ENCODE measurements at regions of chr6 and their contacts with region 1.

Region 1: DNA sequence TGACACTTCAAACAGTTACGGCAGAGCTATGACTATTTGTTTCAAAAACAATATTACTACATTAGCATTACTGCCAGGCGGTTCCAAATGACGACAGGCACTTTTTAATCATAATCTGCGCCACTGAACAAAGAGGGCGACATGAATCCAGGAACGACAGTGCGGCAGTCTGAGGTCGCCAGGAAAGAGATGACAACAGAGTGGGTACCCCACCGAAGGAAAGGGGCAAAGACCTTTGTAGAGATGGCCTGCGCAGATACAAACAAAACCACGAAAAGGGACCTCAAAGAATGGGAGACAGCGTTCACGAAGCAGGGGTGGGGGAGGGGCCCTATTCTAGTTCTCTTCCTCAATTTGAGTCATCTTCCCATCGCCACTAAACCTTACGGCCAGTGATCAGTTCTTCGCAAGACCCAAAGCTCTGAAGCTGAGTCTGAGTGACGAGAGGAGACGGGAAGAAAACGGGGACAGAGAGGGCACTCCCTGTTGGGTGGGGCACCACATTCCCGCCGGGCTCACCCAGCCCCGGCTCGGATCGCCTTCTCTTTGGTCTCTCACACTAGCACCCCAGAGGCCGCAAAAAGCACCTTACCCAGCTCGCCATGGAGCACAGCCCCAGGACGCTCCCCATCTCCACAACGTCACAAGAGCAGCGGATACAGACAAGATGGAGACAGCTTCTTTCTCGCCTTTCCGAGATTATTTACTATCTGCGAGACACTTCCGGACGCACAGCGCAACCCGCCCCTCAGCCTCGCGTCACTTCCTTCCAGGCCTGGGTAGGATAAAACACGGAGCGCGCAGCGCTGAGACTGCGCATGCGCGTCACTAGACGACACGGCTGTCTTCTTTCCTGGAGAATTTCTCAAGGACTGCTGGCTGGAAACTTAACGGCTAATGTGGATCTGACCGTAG is at the start of gene SERINC1:
- DNase-seq: peak; percentile 95 to 96
- ATAC-seq: peak; percentile 99 to 100 (median 99)
- H3K4me3 ChIP-seq: peak within 1 kb of the TSS; percentile 64 to 92 (median 82)
- H3K27ac ChIP-seq: peak within 1 kb of the TSS; percentile 83 to 98 (median 92)
- H3K4me1 ChIP-seq: peaks cover 0 to 53% (median 43%) of the 10 kb centered on the region in 9 donors
- H3K27me3 ChIP-seq: no peaks in the 10 kb centered on the region
- CTCF ChIP-seq: no peak
- total RNA-seq, gene SERINC1: 156 to 206 (median 178) TPM

Region 2: DNA sequence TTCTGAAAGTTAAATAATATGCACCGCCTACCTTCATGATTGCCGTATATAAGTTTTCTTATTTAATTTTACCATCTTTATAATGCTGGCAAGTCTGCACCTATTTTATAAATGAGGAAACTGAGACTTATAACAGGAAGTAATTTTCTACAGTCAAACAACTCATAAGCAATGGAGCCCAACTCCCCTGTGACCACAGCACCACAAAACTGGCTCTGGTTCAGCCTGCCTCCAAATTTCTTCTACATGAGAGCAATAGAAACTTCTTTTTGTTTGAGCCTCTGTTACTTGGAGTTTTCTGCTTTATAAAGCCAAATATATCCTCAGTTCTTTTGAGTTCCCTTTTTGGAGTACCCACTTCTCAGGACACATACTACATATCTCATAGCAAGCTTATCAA is 203.0 kb before region 1 on chr6:
- intact Hi-C with region 1: no loop called
- DNase-seq: no peak
- ATAC-seq: no peak
- H3K4me3 ChIP-seq: no peak overlapping the region
- H3K27ac ChIP-seq: no peak overlapping the region
- H3K4me1 ChIP-seq: no peaks in the 10 kb centered on the region
- H3K27me3 ChIP-seq: no peaks in the 10 kb centered on the region
- CTCF ChIP-seq: no peak

Region 3: GRCh38 chr6:122399384-122400158 is 71.8 kb before region 1 on chr6 and contains the start of gene HSF2:
- intact Hi-C with region 1: loop called in 7 of 10 experiments (anchors 2 to 5 kb)
- DNase-seq: peak; percentile 95 to 96
- ATAC-seq: peak; percentile 99 to 100 (median 99)
- H3K4me3 ChIP-seq: peak within 1 kb of the TSS; percentile 76 to 99 (median 95)
- H3K27ac ChIP-seq: peak within 1 kb of the TSS; percentile 32 to 92 (median 88)
- H3K4me1 ChIP-seq: peaks cover 0 to 46% (median 28%) of the 10 kb centered on the region in 9 donors
- H3K27me3 ChIP-seq: no peaks in the 10 kb centered on the region
- CTCF ChIP-seq: peak in 2 of 9 donors; percentile 0 to 4
- total RNA-seq, gene HSF2: 13.8 to 28.7 (median 23.0) TPM

Region 4: DNA sequence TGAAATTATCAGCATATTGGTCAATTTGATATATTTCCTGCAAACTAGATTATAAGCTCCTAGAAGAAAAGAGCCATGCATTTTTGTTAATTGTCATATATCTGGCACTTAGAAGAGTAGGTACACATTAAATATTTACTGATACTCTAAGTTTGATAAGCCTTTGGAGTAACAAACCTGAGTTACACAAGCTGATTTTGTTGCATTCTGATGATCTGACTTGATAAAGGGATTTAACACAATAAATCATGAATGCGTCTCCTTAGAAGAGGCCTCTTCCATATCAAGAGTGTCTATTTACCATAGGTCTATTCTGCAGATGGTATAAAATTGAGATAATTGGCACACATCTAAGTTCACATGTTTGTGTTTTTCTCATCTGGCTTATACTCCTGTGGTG is 48.8 kb after region 1 on chr6:
- intact Hi-C with region 1: loop called in 3 of 10 experiments (anchors 5 to 10 kb)
- DNase-seq: no peak
- ATAC-seq: no peak
- H3K4me3 ChIP-seq: no peak overlapping the region
- H3K27ac ChIP-seq: no peak overlapping the region
- H3K4me1 ChIP-seq: no peaks in the 10 kb centered on the region
- H3K27me3 ChIP-seq: peaks cover 0 to 4% (median 0%) of the 10 kb centered on the region in 7 donors
- CTCF ChIP-seq: no peak

Region 5: DNA sequence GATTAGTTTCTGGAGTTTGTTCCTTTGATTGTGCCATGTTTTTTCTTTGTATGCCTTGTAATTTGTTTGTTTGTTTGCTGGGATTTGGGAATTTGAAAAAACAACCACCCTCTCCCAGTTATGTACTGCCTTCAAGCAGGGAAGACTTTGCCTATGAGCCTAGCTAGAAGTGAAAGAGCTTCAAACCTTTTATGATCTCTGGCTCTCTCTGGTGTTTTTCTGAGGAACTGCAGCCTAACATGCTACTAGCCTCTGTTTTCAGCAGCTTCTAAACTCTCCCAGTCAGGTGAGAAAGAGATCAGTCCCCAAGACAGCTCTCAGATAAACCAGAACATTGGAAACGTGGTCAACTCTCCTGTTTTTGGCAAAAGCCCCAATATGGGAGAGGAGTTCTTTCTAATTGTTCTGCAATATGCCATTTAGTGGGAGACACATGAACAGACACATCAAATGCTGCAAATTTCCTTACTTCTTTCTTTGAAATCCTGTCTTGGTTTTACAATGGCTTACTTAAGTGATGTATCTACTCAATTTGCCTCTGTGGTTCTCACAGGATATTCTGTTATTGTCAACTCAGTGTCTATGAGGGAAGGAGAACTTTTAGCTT is 59.2 kb after region 1 on chr6:
- intact Hi-C with region 1: loop called in 6 of 10 experiments (anchors 2 to 10 kb)
- DNase-seq: peak in 1 of 2 donors; percentile 57
- ATAC-seq: peak in 6 of 8 donors; percentile 53 to 87 (median 72)
- H3K4me3 ChIP-seq: no peak overlapping the region
- H3K27ac ChIP-seq: no peak overlapping the region
- H3K4me1 ChIP-seq: no peaks in the 10 kb centered on the region
- H3K27me3 ChIP-seq: peaks cover 0 to 29% (median 6%) of the 10 kb centered on the region in 7 donors
- CTCF ChIP-seq: peak; percentile 70 to 95 (median 89)